ENCODE measurements at regions of chr16 and their contacts with region 1.

Region 1: GRCh38 chr16:85728879-85729278 is 22.0 kb downstream of the C16orf74 start:
- DNase-seq: no peak
- ATAC-seq: no peak
- H3K4me3 ChIP-seq: no peak overlapping the region
- H3K27ac ChIP-seq: no peak overlapping the region
- H3K4me1 ChIP-seq: peaks cover 0 to 14% (median 0%) of the 10 kb centered on the region in 12 donors
- H3K27me3 ChIP-seq: no peaks in the 10 kb centered on the region
- CTCF ChIP-seq: no peak
- POLR2A ChIP-seq: no peak

Region 2: GRCh38 chr16:85104821-85105391 is 624.0 kb before region 1 on chr16:
- intact Hi-C with region 1: loop called in 1 of 10 experiments (anchors 10 kb)
- DNase-seq: no peak
- ATAC-seq: peak in 3 of 4 donors; percentile 34 to 57 (median 47)
- H3K4me3 ChIP-seq: no peak overlapping the region
- H3K27ac ChIP-seq: peak overlapping the region in 1 of 12 donors; percentile 28
- H3K4me1 ChIP-seq: peaks cover 0 to 30% (median 0%) of the 10 kb centered on the region in 12 donors
- H3K27me3 ChIP-seq: no peaks in the 10 kb centered on the region
- CTCF ChIP-seq: no peak
- POLR2A ChIP-seq: no peak

Region 3: GRCh38 chr16:85667841-85668413 is 61.0 kb before region 1 on chr16:
- intact Hi-C with region 1: loop called in 1 of 10 experiments (anchors 5 kb)
- DNase-seq: no peak
- ATAC-seq: no peak
- H3K4me3 ChIP-seq: no peak overlapping the region
- H3K27ac ChIP-seq: no peak overlapping the region
- H3K4me1 ChIP-seq: peaks cover 0 to under 1% (median 0%) of the 10 kb centered on the region in 12 donors
- H3K27me3 ChIP-seq: no peaks in the 10 kb centered on the region
- CTCF ChIP-seq: no peak
- POLR2A ChIP-seq: no peak

Region 4: GRCh38 chr16:85777583-85778298 is 48.9 kb after region 1 on chr16:
- intact Hi-C with region 1: no loop called
- DNase-seq: no peak
- ATAC-seq: no peak
- H3K4me3 ChIP-seq: no peak overlapping the region
- H3K27ac ChIP-seq: peak overlapping the region in 5 of 12 donors; percentile 12 to 54 (median 44)
- H3K4me1 ChIP-seq: peaks cover 0 to 11% (median 0%) of the 10 kb centered on the region in 12 donors
- H3K27me3 ChIP-seq: no peaks in the 10 kb centered on the region
- CTCF ChIP-seq: no peak
- POLR2A ChIP-seq: no peak

Region 5: GRCh38 chr16:85789773-85790172 is 60.9 kb after region 1 on chr16:
- intact Hi-C with region 1: no loop called
- DNase-seq: no peak
- ATAC-seq: no peak
- H3K4me3 ChIP-seq: no peak overlapping the region
- H3K27ac ChIP-seq: no peak overlapping the region
- H3K4me1 ChIP-seq: peaks cover 0 to 3% (median 0%) of the 10 kb centered on the region in 12 donors
- H3K27me3 ChIP-seq: no peaks in the 10 kb centered on the region
- CTCF ChIP-seq: no peak
- POLR2A ChIP-seq: no peak